ENCODE measurements at regions of chr15 and their contacts with region 1.

Region 1: DNA sequence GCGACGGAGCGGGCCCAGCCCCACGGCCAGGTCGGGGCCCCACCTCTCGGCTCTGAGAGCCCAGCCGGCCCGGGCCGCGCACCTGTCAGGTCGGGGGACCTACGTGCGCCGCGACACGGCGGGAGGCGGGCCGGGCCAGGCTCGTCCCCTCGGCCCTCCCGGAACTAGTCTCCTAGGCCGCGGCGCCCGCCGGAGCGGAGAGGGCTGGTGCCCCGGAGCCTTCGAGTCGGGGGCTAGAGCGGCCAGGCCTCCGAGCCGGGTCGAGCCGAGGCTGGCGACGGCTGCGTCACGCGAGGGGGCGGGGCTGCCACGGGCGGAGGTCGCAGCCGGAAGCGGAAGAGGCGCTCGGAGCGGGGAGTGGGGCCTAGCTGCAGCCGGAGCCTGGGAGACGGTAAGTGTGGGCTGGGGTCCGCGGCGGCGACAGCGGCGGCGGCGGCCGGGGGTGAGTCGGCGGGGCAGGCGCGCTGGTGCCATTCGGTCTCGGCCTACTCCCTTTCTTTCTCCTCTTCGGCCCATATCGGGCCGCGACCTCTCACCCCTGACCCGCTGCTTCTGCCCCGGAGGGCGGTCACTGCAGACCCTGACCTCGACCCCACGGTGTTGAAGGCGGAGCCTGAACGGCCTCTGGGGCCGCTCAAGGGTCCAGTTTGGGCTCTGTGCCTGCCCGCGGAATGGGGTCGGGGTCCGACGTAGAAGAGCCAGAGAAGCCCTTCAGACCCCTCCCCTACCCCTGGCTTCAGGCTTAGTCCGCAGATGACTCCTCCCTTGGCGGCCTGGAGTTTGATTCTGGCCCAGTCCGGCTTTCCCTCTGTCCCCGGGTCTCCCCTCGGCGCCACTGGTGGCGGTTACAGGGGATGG is at the start of gene CLK3:
- DNase-seq: peak; percentile 96
- ATAC-seq: peak; percentile 82
- H3K4me3 Mint-ChIP-seq: peak within 1 kb of the TSS; percentile 98
- H3K27ac Mint-ChIP-seq: peak within 1 kb of the TSS; percentile 97
- H3K4me1 Mint-ChIP-seq: peaks cover 48% of the 10 kb centered on the region
- H3K27me3 Mint-ChIP-seq: no peaks in the 10 kb centered on the region
- total RNA-seq, gene CLK3: 125 to 128 TPM

Region 2: GRCh38 chr15:74373731-74374647 is 241.7 kb before region 1 on chr15:
- CTCF ChIA-PET with region 1: interaction called, 11 read pairs
- POLR2A ChIA-PET with region 1: interaction called, 3 read pairs
- DNase-seq: peak; percentile 97
- ATAC-seq: peak; percentile 97
- H3K4me3 Mint-ChIP-seq: peak overlapping the region; percentile 77
- H3K27ac Mint-ChIP-seq: peak overlapping the region; percentile 75
- H3K4me1 Mint-ChIP-seq: peaks cover 25% of the 10 kb centered on the region
- H3K27me3 Mint-ChIP-seq: peaks cover 18% of the 10 kb centered on the region

Region 3: GRCh38 chr15:74598126-74598842 is 17.5 kb before region 1 on chr15:
- CTCF ChIA-PET with region 1: interaction called, 9 read pairs
- POLR2A ChIA-PET with region 1: interaction called, 18 read pairs
- DNase-seq: peak; percentile 92
- ATAC-seq: peak; percentile 99
- H3K4me3 Mint-ChIP-seq: peak overlapping the region; percentile 96
- H3K27ac Mint-ChIP-seq: peak overlapping the region; percentile 97
- H3K4me1 Mint-ChIP-seq: peaks cover 23% of the 10 kb centered on the region
- H3K27me3 Mint-ChIP-seq: no peaks in the 10 kb centered on the region

Region 4: GRCh38 chr15:74626752-74627692 is 11.3 kb after region 1 on chr15:
- CTCF ChIA-PET with region 1: interaction called, 228 read pairs
- POLR2A ChIA-PET with region 1: interaction called, 10 read pairs
- DNase-seq: no peak
- ATAC-seq: peak; percentile 22
- H3K4me3 Mint-ChIP-seq: peak overlapping the region; percentile 8
- H3K27ac Mint-ChIP-seq: peak overlapping the region; percentile 84
- H3K4me1 Mint-ChIP-seq: peaks cover 30% of the 10 kb centered on the region
- H3K27me3 Mint-ChIP-seq: no peaks in the 10 kb centered on the region

Region 5: GRCh38 chr15:74680456-74680855 is 64.7 kb after region 1 on chr15:
- CTCF ChIA-PET with region 1: no interaction called
- POLR2A ChIA-PET with region 1: no interaction called
- DNase-seq: no peak
- ATAC-seq: no peak
- H3K4me3 Mint-ChIP-seq: no peak overlapping the region
- H3K27ac Mint-ChIP-seq: no peak overlapping the region
- H3K4me1 Mint-ChIP-seq: peaks cover 3% of the 10 kb centered on the region
- H3K27me3 Mint-ChIP-seq: no peaks in the 10 kb centered on the region

Region 6: GRCh38 chr15:74787251-74788041 is 171.7 kb after region 1 on chr15:
- CTCF ChIA-PET with region 1: interaction called, 11 read pairs
- POLR2A ChIA-PET with region 1: interaction called, 3 read pairs
- DNase-seq: peak; percentile 97
- ATAC-seq: peak; percentile 72
- H3K4me3 Mint-ChIP-seq: peak overlapping the region; percentile 90
- H3K27ac Mint-ChIP-seq: peak overlapping the region; percentile 99
- H3K4me1 Mint-ChIP-seq: peaks cover 66% of the 10 kb centered on the region
- H3K27me3 Mint-ChIP-seq: no peaks in the 10 kb centered on the region